HCT116 (cell line): ENCODE measurements at regions of chr1 and their contacts with region 1.

Region 1: GRCh38 chr1:226062558-226063223 is at the start of gene H3-3A:
- DNase-seq: peak; percentile 79
- ATAC-seq: peak; percentile 79
- H3K4me3 ChIP-seq: peak within 1 kb of the TSS; percentile 80 to 88
- H3K27ac ChIP-seq: peak within 1 kb of the TSS; percentile 83
- H3K4me1 ChIP-seq: peaks cover 6 to 19% of the 10 kb centered on the region in 2 experiments; a peak in 3 of 4 replicates
- H3K27me3 ChIP-seq: no peaks in the 10 kb centered on the region
- CTCF ChIP-seq: no peak
- POLR2A ChIP-seq: peak; percentile 58
- RAD21 ChIP-seq: no peak
- total RNA-seq, gene H3-3A: 386 TPM

Region 2: DNA sequence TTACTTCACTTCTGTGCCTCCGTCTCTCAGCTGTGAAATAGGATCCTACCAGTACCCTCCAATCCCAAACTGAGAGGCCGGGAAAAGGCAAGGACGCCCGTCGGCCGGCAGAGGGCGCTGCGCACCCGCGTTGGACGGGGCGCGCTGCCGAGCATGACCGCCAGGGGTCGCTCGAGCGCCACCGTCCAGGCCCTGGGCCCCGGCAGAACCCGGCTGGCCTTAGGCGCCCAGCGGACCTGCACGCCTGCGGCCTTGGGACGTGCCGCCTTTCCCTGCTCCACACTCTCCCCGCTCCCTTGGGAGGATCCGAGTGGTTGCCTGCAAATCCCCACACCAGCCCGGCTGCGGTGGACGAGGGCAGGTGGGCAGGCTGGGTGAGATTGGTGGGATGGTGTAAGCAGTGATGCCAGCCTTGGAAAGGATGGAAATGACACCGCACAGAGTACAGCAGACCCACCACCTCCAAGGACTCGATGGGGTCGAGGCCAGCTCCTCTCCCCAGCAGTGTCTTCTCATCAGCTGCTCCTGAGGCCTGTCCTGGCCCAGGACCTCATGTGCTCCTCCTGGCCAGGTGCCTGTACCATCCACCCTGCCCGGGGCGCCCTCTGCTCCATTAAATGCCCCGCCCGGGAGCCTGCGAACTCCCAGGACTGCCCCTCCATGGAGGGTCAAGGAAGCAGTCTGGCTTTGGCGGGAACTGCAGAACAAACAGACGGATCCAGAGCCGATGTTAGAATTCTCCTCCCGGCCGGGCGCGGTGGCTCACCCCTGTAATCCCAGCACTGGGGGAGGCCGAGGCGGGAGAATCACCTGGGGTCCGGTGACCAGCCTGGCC is 587.5 kb before region 1 on chr1:
- CTCF ChIA-PET with region 1: interaction called, 8 read pairs
- POLR2A ChIA-PET with region 1: no interaction called
- RAD21 ChIA-PET with region 1: no interaction called
- intact Hi-C with region 1: loop called (anchors 10 kb)
- DNase-seq: peak; percentile 40
- ATAC-seq: peak; percentile 92
- H3K4me3 ChIP-seq: no peak overlapping the region
- H3K27ac ChIP-seq: no peak overlapping the region; the same call in 1 of the 2 replicates
- H3K4me1 ChIP-seq: peaks cover 3 to 10% of the 10 kb centered on the region in 2 experiments; a peak in 3 of 4 replicates
- H3K27me3 ChIP-seq: no peaks in the 10 kb centered on the region
- CTCF ChIP-seq: peak; percentile 100
- POLR2A ChIP-seq: no peak
- RAD21 ChIP-seq: peak; percentile 100

Region 3: GRCh38 chr1:225746361-225747179 is 316.1 kb before region 1 on chr1:
- CTCF ChIA-PET with region 1: no interaction called
- POLR2A ChIA-PET with region 1: no interaction called
- RAD21 ChIA-PET with region 1: no interaction called
- intact Hi-C with region 1: no loop called
- DNase-seq: peak; percentile 51
- ATAC-seq: peak; percentile 81
- H3K4me3 ChIP-seq: peak overlapping the region in 1 of 2 experiments; percentile 36; a peak in 2 of 4 replicates
- H3K27ac ChIP-seq: peak overlapping the region; percentile 3
- H3K4me1 ChIP-seq: peaks cover 12 to 20% of the 10 kb centered on the region in 2 experiments
- H3K27me3 ChIP-seq: no peaks in the 10 kb centered on the region; the same call in 1 of the 2 replicates
- CTCF ChIP-seq: no peak
- POLR2A ChIP-seq: no peak
- RAD21 ChIP-seq: peak; percentile 40

Region 4: DNA sequence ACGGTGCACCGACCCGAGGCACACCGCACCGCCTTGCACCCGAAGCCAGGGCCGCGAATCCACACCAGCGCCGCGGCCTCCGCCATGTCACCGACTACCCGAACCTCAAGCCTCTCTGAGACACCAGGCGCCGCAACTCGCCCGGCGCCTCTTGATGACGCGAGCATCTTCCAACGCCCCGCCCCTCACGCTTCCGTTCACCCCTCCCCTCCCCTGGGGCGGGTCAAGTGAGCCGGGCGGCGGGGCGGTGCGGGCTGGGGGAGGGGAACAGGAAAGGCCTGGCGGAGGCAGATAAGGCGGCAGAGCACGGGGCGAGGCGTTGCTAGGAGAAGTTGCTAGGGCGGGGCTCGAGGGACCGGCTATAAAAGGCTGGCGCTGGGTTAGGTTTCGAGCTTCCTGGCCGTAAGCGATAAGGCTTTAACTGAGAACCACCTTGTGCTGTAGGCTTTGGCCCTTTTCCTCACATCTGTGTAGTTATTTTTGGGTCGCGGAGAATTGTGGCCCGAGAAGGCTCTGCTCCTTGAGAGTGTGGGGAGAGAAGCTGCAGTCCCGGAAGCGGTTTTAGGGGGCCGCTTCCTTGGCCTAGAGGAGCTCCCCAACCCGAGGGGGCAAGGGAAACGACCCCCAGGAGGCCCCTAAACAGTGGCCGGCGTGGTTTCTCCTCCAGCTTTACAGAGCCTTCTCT is 63.3 kb before region 1 on chr1 and contains the start of gene SDE2:
- CTCF ChIA-PET with region 1: interaction called, 7 read pairs
- POLR2A ChIA-PET with region 1: interaction called, 18 read pairs
- RAD21 ChIA-PET with region 1: no interaction called
- intact Hi-C with region 1: loop called (anchors 1 kb)
- DNase-seq: peak; percentile 97
- ATAC-seq: peak; percentile 96
- H3K4me3 ChIP-seq: peak within 1 kb of the TSS; percentile 96 to 98
- H3K27ac ChIP-seq: peak within 1 kb of the TSS; percentile 75
- H3K4me1 ChIP-seq: peaks cover 22 to 36% of the 10 kb centered on the region in 2 experiments
- H3K27me3 ChIP-seq: no peaks in the 10 kb centered on the region
- CTCF ChIP-seq: no peak
- POLR2A ChIP-seq: peak; percentile 98
- RAD21 ChIP-seq: no peak
- total RNA-seq, gene SDE2: 22.5 TPM

Region 5: GRCh38 chr1:226083302-226084101 is 20.8 kb after region 1 on chr1:
- CTCF ChIA-PET with region 1: interaction called, 32 read pairs
- POLR2A ChIA-PET with region 1: interaction called, 6 read pairs
- RAD21 ChIA-PET with region 1: no interaction called
- intact Hi-C with region 1: no loop called
- DNase-seq: peak; percentile 48
- ATAC-seq: peak; percentile 91
- H3K4me3 ChIP-seq: peak overlapping the region; percentile 57 to 75
- H3K27ac ChIP-seq: peak overlapping the region; percentile 84
- H3K4me1 ChIP-seq: peaks cover 2 to 18% of the 10 kb centered on the region in 2 experiments; a peak in 2 of 4 replicates
- H3K27me3 ChIP-seq: no peaks in the 10 kb centered on the region
- CTCF ChIP-seq: no peak
- POLR2A ChIP-seq: no peak
- RAD21 ChIP-seq: no peak

Region 6: GRCh38 chr1:226201029-226201593 is 138.4 kb after region 1 on chr1:
- CTCF ChIA-PET with region 1: interaction called, 13 read pairs
- POLR2A ChIA-PET with region 1: no interaction called
- RAD21 ChIA-PET with region 1: no interaction called
- intact Hi-C with region 1: no loop called
- DNase-seq: peak; percentile 13
- ATAC-seq: peak; percentile 69
- H3K4me3 ChIP-seq: no peak overlapping the region
- H3K27ac ChIP-seq: no peak overlapping the region
- H3K4me1 ChIP-seq: peaks cover 0 to 5% of the 10 kb centered on the region in 2 experiments; a peak in 2 of 4 replicates
- H3K27me3 ChIP-seq: no peaks in the 10 kb centered on the region
- CTCF ChIP-seq: peak; percentile 49 to 62 (median 57)
- POLR2A ChIP-seq: no peak
- RAD21 ChIP-seq: peak; percentile 75